ENCODE measurements at regions of chr13 and their contacts with region 1.

Region 1: GRCh38 chr13:60214213-60215055 is 50.7 kb upstream of the DIAPH3 start:
- DNase-seq: no peak
- H3K4me3 ChIP-seq: no peak overlapping the region
- H3K4me3 Mint-ChIP-seq: no peak overlapping the region
- H3K27ac Mint-ChIP-seq: no peak overlapping the region
- H3K4me1 ChIP-seq: no peaks in the 10 kb centered on the region
- H3K4me1 Mint-ChIP-seq: peaks cover 7% of the 10 kb centered on the region
- H3K27me3 ChIP-seq: no peaks in the 10 kb centered on the region
- H3K27me3 Mint-ChIP-seq: no peaks in the 10 kb centered on the region
- CTCF ChIP-seq: no peak

Region 2: GRCh38 chr13:59303433-59303832 is 911.0 kb before region 1 on chr13:
- CTCF ChIA-PET with region 1: no interaction called
- POLR2A ChIA-PET with region 1: no interaction called
- intact Hi-C with region 1: loop called (anchors 5 kb)
- DNase-seq: no peak
- H3K4me3 ChIP-seq: no peak overlapping the region
- H3K4me3 Mint-ChIP-seq: no peak overlapping the region
- H3K27ac Mint-ChIP-seq: no peak overlapping the region
- H3K4me1 ChIP-seq: no peaks in the 10 kb centered on the region
- H3K4me1 Mint-ChIP-seq: no peaks in the 10 kb centered on the region
- H3K27me3 ChIP-seq: no peaks in the 10 kb centered on the region
- H3K27me3 Mint-ChIP-seq: no peaks in the 10 kb centered on the region
- CTCF ChIP-seq: no peak

Region 3: GRCh38 chr13:60178327-60178726 is 36.1 kb before region 1 on chr13:
- CTCF ChIA-PET with region 1: no interaction called
- POLR2A ChIA-PET with region 1: no interaction called
- intact Hi-C with region 1: no loop called
- DNase-seq: no peak
- H3K4me3 ChIP-seq: no peak overlapping the region
- H3K4me3 Mint-ChIP-seq: no peak overlapping the region
- H3K27ac Mint-ChIP-seq: no peak overlapping the region
- H3K4me1 ChIP-seq: peaks cover 3% of the 10 kb centered on the region; the same call in 1 of the 2 replicates
- H3K4me1 Mint-ChIP-seq: peaks cover 13% of the 10 kb centered on the region
- H3K27me3 ChIP-seq: no peaks in the 10 kb centered on the region
- H3K27me3 Mint-ChIP-seq: no peaks in the 10 kb centered on the region
- CTCF ChIP-seq: no peak

Region 4: GRCh38 chr13:60538566-60538965 is 324.1 kb after region 1 on chr13:
- CTCF ChIA-PET with region 1: no interaction called
- POLR2A ChIA-PET with region 1: no interaction called
- intact Hi-C with region 1: no loop called
- DNase-seq: no peak
- H3K4me3 ChIP-seq: no peak overlapping the region
- H3K4me3 Mint-ChIP-seq: no peak overlapping the region
- H3K27ac Mint-ChIP-seq: no peak overlapping the region
- H3K4me1 ChIP-seq: no peaks in the 10 kb centered on the region
- H3K4me1 Mint-ChIP-seq: no peaks in the 10 kb centered on the region
- H3K27me3 ChIP-seq: no peaks in the 10 kb centered on the region
- H3K27me3 Mint-ChIP-seq: no peaks in the 10 kb centered on the region
- CTCF ChIP-seq: no peak